Aorta (tissue), 5 donors: ENCODE measurements at regions of chr1 and their contacts with region 1.

Region 1: GRCh38 chr1:231357831-231358354 is 19.8 kb downstream of the SPRTN start:
- DNase-seq: no peak
- ATAC-seq: peak; percentile 89
- H3K4me3 ChIP-seq: no peak overlapping the region
- H3K27ac ChIP-seq: no peak overlapping the region
- H3K4me1 ChIP-seq: no peaks in the 10 kb centered on the region
- H3K27me3 ChIP-seq: no peaks in the 10 kb centered on the region

Region 2: DNA sequence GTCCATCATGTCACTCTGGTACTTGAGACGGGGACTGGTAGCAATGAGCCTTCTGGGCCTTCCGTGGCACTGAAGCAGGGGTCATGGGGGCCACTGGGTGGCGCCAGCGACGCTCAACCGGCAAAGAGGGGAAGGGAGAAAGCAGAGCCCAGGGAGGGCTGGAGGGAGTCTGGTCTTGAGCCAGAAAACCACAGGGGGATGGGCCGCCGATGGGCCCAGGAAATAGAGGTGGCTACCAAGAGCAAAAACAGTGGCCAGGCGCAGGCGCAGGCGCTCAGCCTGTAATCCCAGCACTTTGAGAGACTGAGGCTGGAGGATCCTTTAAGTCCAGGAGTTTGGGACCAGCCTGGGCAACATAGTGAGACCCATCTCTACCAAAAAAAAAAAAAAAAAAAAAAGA is 42.0 kb before region 1 on chr1:
- intact Hi-C with region 1: no loop called
- DNase-seq: peak in 1 of 2 donors; percentile 66
- ATAC-seq: no peak
- H3K4me3 ChIP-seq: no peak overlapping the region
- H3K27ac ChIP-seq: no peak overlapping the region
- H3K4me1 ChIP-seq: no peaks in the 10 kb centered on the region
- H3K27me3 ChIP-seq: no peaks in the 10 kb centered on the region

Region 3: DNA sequence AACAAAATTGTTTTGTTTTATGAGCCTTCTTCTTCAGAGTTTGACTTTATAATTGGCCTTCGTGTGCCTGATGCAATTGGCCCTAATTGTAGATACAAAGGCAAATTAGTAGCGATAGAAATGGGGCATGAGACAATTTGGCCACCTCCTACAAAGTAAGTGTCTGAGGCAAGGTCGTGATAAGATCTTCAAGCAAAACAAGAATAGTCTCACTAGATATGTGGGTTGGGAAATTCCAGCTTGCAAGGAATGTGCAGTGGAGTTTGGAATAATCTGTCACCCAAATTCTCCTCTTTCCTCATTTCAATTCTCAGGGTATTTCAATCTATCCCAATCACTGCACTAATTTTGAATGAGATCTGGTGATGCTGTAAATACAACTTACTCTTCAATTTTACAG is 159.2 kb after region 1 on chr1:
- intact Hi-C with region 1: no loop called
- DNase-seq: no peak
- ATAC-seq: no peak
- H3K4me3 ChIP-seq: no peak overlapping the region
- H3K27ac ChIP-seq: no peak overlapping the region
- H3K4me1 ChIP-seq: no peaks in the 10 kb centered on the region
- H3K27me3 ChIP-seq: no peaks in the 10 kb centered on the region

Region 4: GRCh38 chr1:231528172-231529029 is 170.5 kb after region 1 on chr1 and contains the start of gene TSNAX:
- intact Hi-C with region 1: loop called (anchors 5 kb)
- DNase-seq: peak; percentile 95 to 97
- ATAC-seq: peak; percentile 100
- H3K4me3 ChIP-seq: peak within 1 kb of the TSS; percentile 71 to 74
- H3K27ac ChIP-seq: peak within 1 kb of the TSS in 1 of 2 donors; percentile 85
- H3K4me1 ChIP-seq: peaks cover 0 to 2% of the 10 kb centered on the region in 2 donors
- H3K27me3 ChIP-seq: no peaks in the 10 kb centered on the region
- total RNA-seq, gene TSNAX: 37.2 to 42.0 TPM

Region 5: DNA sequence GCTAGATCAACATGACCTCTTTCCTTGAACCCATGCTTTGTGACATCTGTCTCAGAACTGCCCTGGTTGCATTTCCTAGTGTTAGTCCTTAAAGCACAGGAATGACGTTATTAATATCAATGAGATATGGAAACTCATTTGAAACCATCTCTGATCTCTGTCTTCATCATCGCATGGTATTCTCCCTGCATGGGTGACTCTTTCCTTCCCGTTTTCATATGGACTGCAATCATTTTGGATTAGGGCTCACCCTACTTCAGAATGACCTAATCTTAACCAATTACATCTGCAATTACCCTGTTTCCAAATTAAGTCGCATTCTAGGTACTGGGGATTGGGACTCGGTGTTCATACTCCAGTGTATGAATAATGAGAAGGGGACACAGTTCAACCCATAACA is 227.0 kb after region 1 on chr1:
- intact Hi-C with region 1: loop called (anchors 5 kb)
- DNase-seq: no peak
- ATAC-seq: no peak
- H3K4me3 ChIP-seq: no peak overlapping the region
- H3K27ac ChIP-seq: no peak overlapping the region
- H3K4me1 ChIP-seq: no peaks in the 10 kb centered on the region
- H3K27me3 ChIP-seq: no peaks in the 10 kb centered on the region

Region 6: DNA sequence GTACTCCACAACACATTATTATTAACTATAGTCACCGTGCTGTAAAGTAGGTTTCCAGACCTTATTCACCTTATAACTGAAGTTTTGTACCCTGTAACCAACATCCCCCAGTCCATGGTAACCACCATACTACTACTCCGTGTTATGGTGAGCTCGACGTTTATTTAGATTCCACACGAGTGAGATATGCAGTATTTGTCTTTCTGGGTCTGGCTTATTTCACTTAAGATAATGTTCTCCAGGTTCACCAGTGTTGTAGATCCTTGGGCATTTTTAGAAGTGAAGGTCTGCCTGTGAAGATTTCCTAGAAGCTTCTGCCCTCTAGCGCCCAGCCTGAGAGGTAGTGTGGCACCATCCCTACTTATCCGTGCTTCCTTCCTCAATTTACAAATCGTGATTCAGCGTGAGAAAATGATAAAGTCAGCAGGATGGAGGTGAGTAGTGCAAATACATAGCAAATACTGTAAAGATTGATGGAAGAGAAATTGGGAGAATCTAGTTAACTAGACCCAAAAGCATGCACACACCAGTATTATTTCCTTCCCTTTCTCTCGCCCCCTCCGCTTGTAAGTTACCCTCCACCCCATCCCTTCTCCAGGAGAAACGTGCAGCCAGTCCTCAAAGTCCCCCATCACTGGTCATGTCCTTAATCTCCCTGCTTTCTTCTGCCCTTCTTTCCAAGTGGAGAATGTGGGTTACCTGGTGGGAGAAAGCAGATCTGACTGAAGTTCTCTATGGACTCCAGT is 232.7 kb after region 1 on chr1:
- intact Hi-C with region 1: loop called (anchors 5 kb)
- DNase-seq: peak in 1 of 2 donors; percentile 59
- ATAC-seq: peak; percentile 76
- H3K4me3 ChIP-seq: no peak overlapping the region
- H3K27ac ChIP-seq: no peak overlapping the region
- H3K4me1 ChIP-seq: no peaks in the 10 kb centered on the region
- H3K27me3 ChIP-seq: no peaks in the 10 kb centered on the region

Region 7: GRCh38 chr1:231606707-231607106 is 248.8 kb after region 1 on chr1:
- intact Hi-C with region 1: loop called in 1 of 2 experiments (anchors 5 kb)
- DNase-seq: no peak
- ATAC-seq: no peak
- H3K4me3 ChIP-seq: no peak overlapping the region
- H3K27ac ChIP-seq: no peak overlapping the region
- H3K4me1 ChIP-seq: peaks cover 0 to 1% of the 10 kb centered on the region in 2 donors
- H3K27me3 ChIP-seq: no peaks in the 10 kb centered on the region